ENCODE measurements at regions of chr7 and their contacts with region 1.

Region 1: GRCh38 chr7:124954790-124955419 is 25.3 kb upstream of the POT1 start:
- DNase-seq: no peak
- H3K4me3 ChIP-seq: no peak overlapping the region
- H3K27me3 ChIP-seq: no peaks in the 10 kb centered on the region
- CTCF ChIP-seq: no peak

Region 2: DNA sequence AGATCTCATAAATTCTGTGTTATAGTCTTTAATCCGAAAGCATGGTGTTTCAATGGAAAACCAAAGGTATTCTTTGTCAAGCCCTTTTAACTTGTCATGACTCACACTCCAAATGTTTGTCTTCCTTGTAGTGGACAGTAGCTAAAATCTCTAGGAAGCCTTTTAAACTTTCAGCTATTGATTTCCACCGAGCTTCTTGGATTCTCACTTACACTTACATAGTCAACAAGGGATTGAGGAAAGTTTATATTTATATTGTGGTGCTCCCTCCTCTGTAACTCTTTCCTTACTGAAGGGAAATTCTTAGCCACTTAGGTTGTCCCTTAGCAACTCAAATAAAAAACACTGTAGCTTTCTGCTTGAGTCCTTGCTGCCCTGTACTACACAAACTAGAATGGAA is 158.1 kb before region 1 on chr7:
- CTCF ChIA-PET with region 1: no interaction called
- POLR2A ChIA-PET with region 1: no interaction called
- DNase-seq: no peak
- H3K4me3 ChIP-seq: no peak overlapping the region
- H3K27me3 ChIP-seq: peaks cover 3% of the 10 kb centered on the region; the same call in 1 of the 2 replicates
- CTCF ChIP-seq: no peak

Region 3: DNA sequence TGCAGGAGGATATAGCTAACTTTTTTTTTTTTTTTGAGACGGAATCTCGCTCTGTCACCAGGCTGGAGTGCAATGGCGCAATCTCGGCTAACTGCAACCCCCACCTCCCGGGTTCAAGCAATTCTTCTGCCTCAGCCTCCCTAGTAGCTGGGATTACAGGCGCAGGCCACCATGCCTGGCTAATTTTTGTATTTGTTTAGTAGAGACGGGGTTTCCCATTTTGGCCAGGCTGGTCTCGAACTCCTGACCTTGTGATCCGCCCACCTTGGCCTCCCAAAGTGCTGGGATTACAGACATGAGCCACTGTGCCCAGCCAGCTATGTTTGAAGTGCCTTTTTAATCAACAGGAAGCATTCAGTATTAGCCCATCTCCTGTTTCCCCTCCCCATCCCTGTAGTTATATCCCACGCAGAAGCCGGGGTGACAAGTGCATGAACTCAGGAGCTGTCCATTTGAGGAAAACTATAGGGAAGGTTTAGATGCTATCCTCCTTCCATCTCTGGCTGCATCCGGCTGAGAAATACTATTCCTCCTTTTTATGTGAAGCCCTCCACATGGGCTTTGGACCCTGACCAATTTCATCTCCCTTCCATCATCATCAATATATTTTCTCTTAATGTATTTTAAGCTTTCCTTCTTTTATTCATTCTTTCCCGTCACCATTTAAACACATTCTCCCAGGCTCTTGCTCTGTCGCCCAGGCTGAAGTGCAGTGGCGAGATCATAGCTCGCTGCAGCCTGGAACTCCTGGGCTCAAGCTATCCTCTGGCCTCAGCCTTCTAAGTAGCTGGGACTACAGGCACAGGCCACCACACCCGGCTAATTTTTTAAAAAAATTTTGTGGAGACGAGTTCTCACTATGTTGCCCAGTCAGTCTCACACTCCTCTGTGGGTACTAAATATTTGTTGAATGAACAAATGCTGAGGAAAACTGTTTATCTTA is 24.0 kb before region 1 on chr7:
- CTCF ChIA-PET with region 1: no interaction called
- POLR2A ChIA-PET with region 1: interaction called, 14 read pairs
- DNase-seq: no peak
- H3K4me3 ChIP-seq: no peak overlapping the region
- H3K27me3 ChIP-seq: no peaks in the 10 kb centered on the region
- CTCF ChIP-seq: no peak

Region 4: GRCh38 chr7:125201002-125201401 is 246.1 kb after region 1 on chr7:
- CTCF ChIA-PET with region 1: no interaction called
- POLR2A ChIA-PET with region 1: no interaction called
- DNase-seq: no peak
- H3K4me3 ChIP-seq: no peak overlapping the region
- H3K27me3 ChIP-seq: no peaks in the 10 kb centered on the region
- CTCF ChIP-seq: no peak

Measured in BJ (cell line).